Adrenal gland (tissue), 19 donors: ENCODE measurements at regions of chr2 and their contacts with region 1.

Region 1: DNA sequence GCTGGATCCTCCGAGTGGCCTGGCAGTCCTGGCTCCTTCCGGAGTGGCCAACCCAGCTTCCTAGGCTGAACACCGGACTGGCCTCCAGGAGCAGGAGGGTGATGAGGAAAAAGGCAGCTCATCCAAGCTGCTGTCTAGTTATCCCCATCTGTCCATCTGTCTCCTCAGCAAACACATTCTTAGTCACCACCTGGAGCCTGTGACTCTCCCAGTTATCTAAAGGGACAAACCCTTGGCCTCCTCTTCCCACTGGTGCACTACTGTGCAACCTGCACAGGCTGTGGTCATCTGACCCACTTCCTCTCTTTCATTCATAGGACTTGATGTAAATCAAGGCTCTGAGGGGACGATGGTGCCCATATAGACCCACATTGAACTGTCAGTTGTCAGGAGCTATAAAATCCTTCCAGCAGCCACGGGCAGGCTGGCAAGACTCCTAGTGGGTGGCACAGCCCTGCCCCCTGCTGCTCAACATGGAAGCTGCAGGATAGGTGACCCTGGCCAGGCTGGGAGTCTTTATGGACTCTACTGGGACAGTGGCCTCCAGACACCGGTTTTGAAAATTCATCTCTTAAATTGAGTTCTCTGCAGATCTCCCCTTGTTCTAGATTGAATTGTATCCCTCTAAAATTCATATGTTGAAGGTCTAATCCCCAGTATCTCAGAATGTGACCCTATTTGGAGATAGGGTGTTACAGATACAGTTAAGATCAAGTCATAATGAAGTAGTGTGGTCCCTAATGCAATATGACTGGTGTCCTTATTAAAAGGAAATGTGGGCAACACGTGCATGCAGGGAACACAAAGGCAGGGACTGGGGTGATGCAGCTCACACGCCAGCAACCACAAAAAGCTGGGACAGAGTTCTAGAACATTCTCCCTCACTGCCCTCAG is 29.3 kb upstream of the DUSP2 start:
- DNase-seq: peak; percentile 72 to 91 (median 85)
- H3K4me3 ChIP-seq: no peak overlapping the region
- H3K27ac ChIP-seq: no peak overlapping the region
- H3K4me1 ChIP-seq: peaks cover 0 to 8% of the 10 kb centered on the region in 2 donors
- H3K27me3 ChIP-seq: no peaks in the 10 kb centered on the region
- CTCF ChIP-seq: peak; percentile 69 to 93 (median 88)
- POLR2A ChIP-seq: no peak

Region 2: DNA sequence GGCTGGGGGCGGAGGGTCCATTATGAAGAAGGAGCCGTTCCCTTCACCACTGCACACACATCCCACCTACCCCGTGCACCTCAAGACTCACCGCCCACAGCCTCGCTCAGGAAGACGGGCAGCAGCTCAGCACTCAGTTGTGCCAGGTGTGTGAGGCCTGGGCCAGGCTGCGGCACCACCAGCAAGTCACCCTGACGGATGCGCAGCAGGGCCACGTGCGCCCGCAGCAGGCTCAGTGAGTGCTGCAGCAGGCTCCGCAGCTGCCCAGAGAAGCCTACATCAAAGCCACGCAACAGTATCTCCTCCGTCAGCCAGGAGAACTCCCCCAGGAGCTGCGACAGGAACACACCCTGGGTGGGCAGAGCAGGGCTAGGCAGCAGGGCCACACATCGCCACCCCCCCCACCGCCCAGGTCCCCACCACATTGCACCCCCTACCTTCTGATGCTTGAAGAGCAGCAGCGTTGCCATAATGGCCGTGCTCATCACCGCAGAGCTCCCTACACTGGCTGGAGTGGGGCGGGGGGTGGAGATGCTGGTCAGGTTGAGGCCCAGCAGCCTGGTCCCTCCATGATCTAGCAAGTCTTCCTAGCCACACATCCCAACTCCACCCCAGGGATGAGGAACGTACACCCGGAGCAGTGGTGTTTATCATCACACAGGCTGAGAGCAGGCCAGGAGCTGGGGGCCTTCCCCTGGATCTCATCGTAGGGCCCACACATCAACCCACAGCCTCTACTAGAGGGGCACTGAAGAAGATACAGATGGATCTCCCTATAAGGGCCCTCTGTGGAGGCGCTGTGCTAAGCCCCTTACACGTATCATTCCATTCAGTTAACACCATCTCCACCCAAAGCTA is 149.9 kb before region 1 on chr2:
- intact Hi-C with region 1: loop called in 1 of 2 experiments (anchors 10 kb)
- DNase-seq: no peak
- H3K4me3 ChIP-seq: no peak overlapping the region
- H3K27ac ChIP-seq: no peak overlapping the region
- H3K4me1 ChIP-seq: no peaks in the 10 kb centered on the region
- H3K27me3 ChIP-seq: no peaks in the 10 kb centered on the region
- CTCF ChIP-seq: no peak
- POLR2A ChIP-seq: no peak

Region 3: DNA sequence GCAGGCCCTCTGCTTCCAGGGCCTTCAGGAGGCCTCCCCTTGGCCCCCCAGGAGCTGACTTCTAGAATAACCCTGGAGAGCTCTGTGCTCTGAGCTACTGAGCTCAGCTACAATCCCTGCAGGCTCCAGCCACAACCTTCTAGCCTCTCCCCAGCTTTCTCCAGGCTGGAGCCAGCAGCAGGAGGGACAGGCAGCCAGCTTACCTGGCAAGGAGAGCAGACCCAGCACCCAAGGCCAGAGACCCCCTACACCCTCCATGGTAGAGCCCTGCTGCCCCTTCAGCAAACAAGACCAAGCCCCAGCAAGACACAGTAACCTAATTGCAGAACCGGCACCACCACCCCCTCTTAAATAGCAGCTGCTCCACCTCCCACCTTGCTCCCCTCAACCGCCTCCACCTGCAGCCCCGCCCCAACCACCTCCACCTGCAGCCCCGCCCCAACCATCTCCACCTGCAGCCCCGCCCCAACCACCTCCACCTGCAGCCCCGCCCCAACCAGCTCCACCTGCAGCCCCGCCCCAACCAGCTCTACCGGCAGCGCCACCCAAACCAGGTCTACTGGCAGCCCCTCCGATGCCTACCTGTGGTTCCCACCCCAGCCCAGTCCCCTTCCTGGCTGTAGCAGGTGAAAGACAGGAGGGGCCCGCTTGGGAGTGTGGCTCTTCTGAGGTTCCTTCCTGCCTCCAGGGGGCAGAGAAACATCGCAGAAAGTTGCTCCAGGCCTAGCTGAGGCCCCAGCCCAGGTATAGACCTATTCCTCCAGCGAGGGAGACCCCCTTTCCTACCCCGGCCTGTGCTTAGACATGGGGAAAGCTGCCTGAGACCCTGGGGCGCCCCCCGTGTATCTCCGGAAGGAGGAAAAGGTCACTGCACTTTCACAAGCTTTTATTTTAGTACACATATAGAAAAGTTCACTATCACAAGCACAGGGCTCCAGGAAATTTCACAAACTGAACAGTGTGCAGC is 36.0 kb before region 1 on chr2 and contains the start of gene ASTL:
- intact Hi-C with region 1: loop called (anchors 2 to 5 kb)
- DNase-seq: peak in 6 of 7 donors; percentile 44 to 66 (median 53)
- H3K4me3 ChIP-seq: no peak within 1 kb of the TSS
- H3K27ac ChIP-seq: no peak within 1 kb of the TSS
- H3K4me1 ChIP-seq: no peaks in the 10 kb centered on the region
- H3K27me3 ChIP-seq: no peaks in the 10 kb centered on the region
- CTCF ChIP-seq: peak; percentile 28 to 69 (median 54)
- POLR2A ChIP-seq: no peak
- total RNA-seq, gene ASTL: not detected